Posterior vena cava (tissue), 2 donors: ENCODE measurements at regions of chr7 and their contacts with region 1.

Region 1: GRCh38 chr7:137304624-137305235 is 38.8 kb downstream of the PTN start:
- DNase-seq: no peak

Region 2: GRCh38 chr7:136923111-136923510 is 381.6 kb before region 1 on chr7:
- intact Hi-C with region 1: loop called in 1 of 2 experiments (anchors 10 kb)
- DNase-seq: no peak

Region 3: DNA sequence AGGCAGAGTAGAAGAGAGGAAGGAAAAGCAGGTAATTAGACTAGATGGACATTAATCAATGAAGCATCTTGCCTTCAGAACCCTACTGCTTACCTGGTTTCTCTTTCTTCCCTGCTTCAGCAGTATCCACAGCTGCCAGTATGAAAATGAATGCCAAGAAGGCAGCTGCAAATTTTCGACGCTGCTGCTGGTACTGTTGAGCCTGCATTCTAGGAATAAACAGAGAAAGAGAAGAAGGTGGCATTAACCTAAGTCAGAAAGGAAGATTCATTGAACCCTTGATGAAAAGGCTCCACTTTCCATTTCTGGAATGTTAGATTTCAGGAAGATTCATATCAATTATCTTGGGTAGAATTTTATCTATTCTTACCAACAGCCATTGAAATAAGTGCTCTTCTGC is 50.0 kb before region 1 on chr7:
- intact Hi-C with region 1: no loop called
- DNase-seq: no peak

Region 4: GRCh38 chr7:137421366-137421765 is 116.6 kb after region 1 on chr7:
- intact Hi-C with region 1: no loop called
- DNase-seq: no peak